Left colon (tissue), 2 donors: ENCODE measurements at regions of chr1 and their contacts with region 1.

Region 1: DNA sequence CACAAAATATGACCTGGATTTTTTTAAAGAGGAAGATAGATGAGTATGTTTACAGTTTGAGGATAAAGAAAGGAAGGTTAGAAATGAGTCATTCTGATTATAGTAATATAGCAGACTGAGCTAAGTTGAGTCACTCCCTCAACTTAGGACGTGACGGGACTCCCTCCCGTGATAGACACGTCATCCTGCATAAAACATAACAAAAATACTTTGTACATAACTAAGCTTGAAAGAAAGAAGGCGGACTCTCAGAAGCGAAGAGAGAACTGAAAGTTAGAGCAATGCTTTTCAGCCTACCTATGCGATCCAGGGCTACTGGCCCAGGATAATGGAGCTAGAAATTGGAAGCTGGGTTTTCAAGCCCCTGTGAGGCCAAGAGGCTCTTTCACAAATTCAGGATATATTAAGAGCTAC is 53.0 kb upstream of the DESI2 start:
- DNase-seq: no peak
- ATAC-seq: peak; percentile 79

Region 2: GRCh38 chr1:244796718-244797406 is 196.9 kb after region 1 on chr1:
- intact Hi-C with region 1: loop called (anchors 2 to 5 kb)
- DNase-seq: peak in 1 of 2 donors; percentile 69
- ATAC-seq: peak; percentile 66

Region 3: GRCh38 chr1:245051349-245052221 is 451.6 kb after region 1 on chr1:
- intact Hi-C with region 1: loop called (anchors 10 kb)
- DNase-seq: no peak
- ATAC-seq: no peak